Activated CD4-positive, alpha-beta T cell treated with anti-CD3 and anti-CD28 coated beads, Interleukin-2, amount 10 ng/mL, durations not matched to agents 7 days and 5 days (primary cell): ENCODE measurements at regions of chr11 and their contacts with region 1.

Region 1: DNA sequence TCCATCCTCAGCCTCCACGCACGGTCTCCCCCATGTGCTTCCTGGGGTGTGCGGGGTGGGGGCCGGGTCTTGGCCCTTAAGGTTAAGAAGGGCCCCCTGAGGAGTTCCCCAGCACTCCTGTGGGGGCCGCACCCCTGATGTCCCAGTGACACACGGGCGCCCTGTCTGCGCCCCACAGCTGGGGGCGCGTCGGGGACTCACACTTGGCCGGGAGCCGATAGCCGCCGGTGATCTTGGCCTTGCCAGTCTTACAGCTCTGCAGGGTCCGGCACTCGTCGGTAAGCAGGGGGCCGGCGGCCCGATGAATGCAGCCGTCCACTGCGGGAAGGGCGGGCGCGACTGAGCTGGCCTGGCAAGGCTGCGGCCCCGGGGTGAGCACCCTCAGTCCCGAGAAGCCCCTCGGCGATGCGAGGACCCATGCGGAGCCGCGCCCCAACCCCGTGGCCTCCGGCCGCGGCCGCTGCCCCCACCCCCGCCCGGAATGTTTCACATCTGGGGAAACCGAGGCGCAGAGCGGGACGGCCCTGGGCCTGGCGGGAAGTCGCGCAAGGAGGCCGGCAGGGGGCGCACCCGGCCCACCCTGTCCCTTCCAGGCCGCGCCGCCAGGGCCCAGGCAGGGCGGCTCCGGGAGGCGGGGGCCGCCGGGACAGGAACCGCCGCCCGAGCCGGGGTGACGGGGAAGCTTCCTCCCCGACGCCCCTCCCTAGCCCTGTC is 13.9 kb downstream of the OTUB1 start:
- DNase-seq: peak; percentile 72
- H3K4me3 Mint-ChIP-seq: no peak overlapping the region
- H3K27ac Mint-ChIP-seq: no peak overlapping the region
- H3K4me1 Mint-ChIP-seq: peaks cover 13% of the 10 kb centered on the region
- H3K27me3 Mint-ChIP-seq: peaks cover 4% of the 10 kb centered on the region

Region 2: GRCh38 chr11:63986156-63986931 is 13.8 kb before region 1 on chr11 and contains the start of gene OTUB1:
- CTCF ChIA-PET with region 1: interaction called, 21 read pairs
- POLR2A ChIA-PET with region 1: no interaction called
- DNase-seq: peak; percentile 92
- H3K4me3 Mint-ChIP-seq: peak within 1 kb of the TSS; percentile 95
- H3K27ac Mint-ChIP-seq: peak within 1 kb of the TSS; percentile 97
- H3K4me1 Mint-ChIP-seq: peaks cover 41% of the 10 kb centered on the region
- H3K27me3 Mint-ChIP-seq: no peaks in the 10 kb centered on the region
- total RNA-seq, gene OTUB1: 94.8 to 102 TPM

Region 3: GRCh38 chr11:64015935-64016845 is 16.0 kb after region 1 on chr11:
- CTCF ChIA-PET with region 1: interaction called, 21 read pairs
- POLR2A ChIA-PET with region 1: no interaction called
- DNase-seq: no peak
- H3K4me3 Mint-ChIP-seq: no peak overlapping the region
- H3K27ac Mint-ChIP-seq: no peak overlapping the region
- H3K4me1 Mint-ChIP-seq: no peaks in the 10 kb centered on the region
- H3K27me3 Mint-ChIP-seq: no peaks in the 10 kb centered on the region

Region 4: GRCh38 chr11:64028398-64029115 is 28.4 kb after region 1 on chr11:
- CTCF ChIA-PET with region 1: interaction called, 11 read pairs
- POLR2A ChIA-PET with region 1: no interaction called
- DNase-seq: no peak
- H3K4me3 Mint-ChIP-seq: no peak overlapping the region
- H3K27ac Mint-ChIP-seq: no peak overlapping the region
- H3K4me1 Mint-ChIP-seq: peaks cover 2% of the 10 kb centered on the region
- H3K27me3 Mint-ChIP-seq: peaks cover 11% of the 10 kb centered on the region

Region 5: DNA sequence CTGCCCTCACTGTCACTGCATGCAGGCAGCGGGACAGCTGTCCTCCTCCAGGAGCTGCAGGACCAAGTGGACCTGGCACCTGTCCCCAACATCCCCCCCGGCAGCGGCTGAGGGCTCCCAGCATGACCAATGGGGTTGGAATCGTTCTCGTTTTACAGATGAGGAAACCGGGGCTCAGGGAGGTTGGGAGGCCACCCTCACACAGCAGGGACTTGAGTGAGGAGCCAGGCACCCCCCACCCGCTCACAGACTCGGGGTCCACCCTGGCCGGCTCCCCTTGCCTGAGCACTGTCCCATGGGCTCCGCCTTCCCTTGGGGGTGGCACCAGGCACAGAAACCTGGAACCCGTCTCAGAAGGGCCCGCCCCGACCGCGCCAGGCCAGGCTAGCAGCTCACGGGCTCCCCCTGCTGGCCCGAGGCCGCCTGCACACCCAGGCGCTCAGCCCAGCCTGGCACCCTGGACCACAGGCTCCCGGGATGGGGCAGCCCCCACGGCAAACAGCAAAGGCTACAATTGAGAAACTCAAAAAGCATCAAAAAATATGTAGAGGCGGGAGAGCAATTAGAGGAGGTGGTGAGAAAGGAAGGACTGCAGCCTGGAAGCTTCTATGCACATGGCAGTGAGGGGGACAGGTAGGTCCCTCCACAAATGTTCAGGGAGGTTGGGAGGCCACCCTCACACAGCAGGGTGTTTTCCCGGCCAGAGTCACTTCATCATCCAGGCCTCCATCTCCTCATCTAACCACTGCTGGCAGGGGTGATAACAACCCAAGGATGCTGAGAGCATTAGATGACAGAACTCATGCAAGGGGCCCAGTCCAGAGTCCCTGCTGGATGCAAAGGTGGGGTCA is 152.9 kb after region 1 on chr11:
- CTCF ChIA-PET with region 1: interaction called, 17 read pairs
- POLR2A ChIA-PET with region 1: no interaction called
- DNase-seq: peak; percentile 69
- H3K4me3 Mint-ChIP-seq: no peak overlapping the region
- H3K27ac Mint-ChIP-seq: no peak overlapping the region
- H3K4me1 Mint-ChIP-seq: peaks cover 5% of the 10 kb centered on the region
- H3K27me3 Mint-ChIP-seq: no peaks in the 10 kb centered on the region